H1 (cell line): ENCODE measurements at regions of chr6 and their contacts with region 1.

Region 1: DNA sequence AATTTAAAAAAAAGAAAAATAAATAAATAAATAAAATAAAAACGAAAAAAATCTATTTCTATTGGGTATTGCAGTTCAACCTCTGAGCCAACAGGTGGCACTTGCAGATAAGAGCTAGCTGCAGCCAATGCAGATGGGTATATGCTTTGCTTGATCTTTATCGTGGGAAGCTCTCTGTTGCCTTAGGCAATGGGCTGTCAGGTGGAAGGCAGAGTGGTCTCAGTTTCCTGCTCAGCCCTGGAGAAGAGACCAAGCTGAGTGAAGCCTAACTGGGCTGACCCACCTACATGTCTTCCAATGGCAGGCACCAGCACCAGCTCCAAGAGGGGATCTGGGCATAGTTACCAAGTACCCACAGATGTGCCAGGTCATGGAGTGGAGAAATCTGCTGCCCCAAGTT is 95.0 kb downstream of the AK9 start:
- DNase-seq: peak in 1 of 2 experiments; percentile 49
- H3K4me3 ChIP-seq: no peak overlapping the region
- H3K27ac ChIP-seq: no peak overlapping the region
- H3K4me1 ChIP-seq: no peaks in the 10 kb centered on the region
- H3K27me3 ChIP-seq: no peaks in the 10 kb centered on the region
- CTCF ChIP-seq: peak in 2 of 3 experiments; percentile 59 to 62; a peak in 3 of 4 replicates
- EP300 ChIP-seq: no peak
- POLR2A ChIP-seq: no peak
- RAD21 ChIP-seq: peak; percentile 80 to 82

Region 2: GRCh38 chr6:109308018-109308492 is 287.9 kb before region 1 on chr6:
- CTCF ChIA-PET with region 1: no interaction called
- POLR2A ChIA-PET with region 1: no interaction called
- DNase-seq: no peak
- H3K4me3 ChIP-seq: no peak overlapping the region
- H3K27ac ChIP-seq: no peak overlapping the region
- H3K4me1 ChIP-seq: 0 out of 7 replicates have a peak, but pooled peaks cover 0 to 2% (median 0%) of the 10 kb centered on the region in 4 experiments
- H3K27me3 ChIP-seq: no peaks in the 10 kb centered on the region
- CTCF ChIP-seq: no peak
- EP300 ChIP-seq: no peak
- POLR2A ChIP-seq: no peak
- RAD21 ChIP-seq: no peak

Region 3: DNA sequence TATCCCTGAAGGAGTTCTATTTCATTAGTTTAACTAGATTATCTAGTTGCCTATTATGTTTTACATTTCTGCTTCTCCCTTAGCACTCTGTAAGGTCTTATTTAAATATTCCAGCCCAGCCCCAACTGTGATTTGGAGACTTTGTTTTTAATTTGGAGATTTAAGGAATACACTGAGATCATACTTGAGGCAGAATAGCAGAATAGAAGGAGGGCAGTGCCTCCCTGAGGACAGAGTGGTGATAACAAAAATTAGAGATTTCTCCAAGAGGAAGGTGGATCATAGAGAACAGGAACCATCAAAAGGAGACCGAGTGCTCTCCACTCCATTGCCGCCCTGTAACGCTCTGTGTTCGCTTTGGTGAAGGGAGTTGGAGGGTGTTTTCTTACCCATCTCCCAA is 199.0 kb before region 1 on chr6:
- CTCF ChIA-PET with region 1: no interaction called
- POLR2A ChIA-PET with region 1: no interaction called
- DNase-seq: no peak
- H3K4me3 ChIP-seq: no peak overlapping the region
- H3K27ac ChIP-seq: no peak overlapping the region
- H3K4me1 ChIP-seq: no peaks in the 10 kb centered on the region
- H3K27me3 ChIP-seq: no peaks in the 10 kb centered on the region
- CTCF ChIP-seq: peak in 2 of 3 experiments; percentile 29 to 30; a peak in 2 of 4 replicates
- EP300 ChIP-seq: no peak
- POLR2A ChIP-seq: no peak
- RAD21 ChIP-seq: peak; percentile 68 to 71

Region 4: DNA sequence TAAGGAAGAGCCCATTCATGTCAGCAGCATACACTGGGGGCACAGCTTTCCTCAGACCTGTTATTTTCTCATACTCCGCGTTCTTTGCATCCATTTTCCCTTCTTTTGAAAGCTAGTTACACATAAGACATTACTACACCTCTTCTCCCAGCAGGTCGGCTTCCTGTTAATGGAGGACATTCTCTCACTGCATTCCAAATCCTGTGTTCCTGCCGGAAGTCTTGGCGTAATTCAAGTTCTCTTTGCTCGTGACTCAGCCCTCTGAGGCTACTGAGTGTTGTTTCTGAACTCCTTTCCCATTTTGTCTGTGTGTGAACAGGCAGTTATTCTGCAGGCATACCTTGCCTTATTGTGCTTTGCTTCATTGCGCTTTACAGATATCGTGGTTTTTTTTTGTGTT is 15.5 kb before region 1 on chr6:
- CTCF ChIA-PET with region 1: interaction called, 20 read pairs
- POLR2A ChIA-PET with region 1: no interaction called
- DNase-seq: no peak
- H3K4me3 ChIP-seq: no peak overlapping the region
- H3K27ac ChIP-seq: 0 out of 2 replicates have a peak overlapping the region, but pooled peaks have one; percentile 4
- H3K4me1 ChIP-seq: peaks cover 0 to 5% (median 3%) of the 10 kb centered on the region in 4 experiments; a peak in 3 of 7 replicates
- H3K27me3 ChIP-seq: no peaks in the 10 kb centered on the region
- CTCF ChIP-seq: no peak
- EP300 ChIP-seq: no peak
- POLR2A ChIP-seq: no peak
- RAD21 ChIP-seq: no peak

Region 5: GRCh38 chr6:109606359-109606758 is 10.4 kb after region 1 on chr6:
- CTCF ChIA-PET with region 1: interaction called, 15 read pairs
- POLR2A ChIA-PET with region 1: no interaction called
- DNase-seq: no peak
- H3K4me3 ChIP-seq: no peak overlapping the region
- H3K27ac ChIP-seq: no peak overlapping the region
- H3K4me1 ChIP-seq: no peaks in the 10 kb centered on the region
- H3K27me3 ChIP-seq: no peaks in the 10 kb centered on the region; a peak in 1 of 7 replicates
- CTCF ChIP-seq: no peak
- EP300 ChIP-seq: no peak
- POLR2A ChIP-seq: no peak
- RAD21 ChIP-seq: no peak

Region 6: GRCh38 chr6:109690737-109691621 is 95.0 kb after region 1 on chr6 and contains the starts of genes AK9 and FIG4:
- CTCF ChIA-PET with region 1: interaction called, 16 read pairs
- POLR2A ChIA-PET with region 1: no interaction called
- DNase-seq: peak; percentile 84 to 95
- H3K4me3 ChIP-seq: peak within 1 kb of the TSS; percentile 69 to 95 (median 84)
- H3K27ac ChIP-seq: peak within 1 kb of the TSS; percentile 42
- H3K4me1 ChIP-seq: peaks cover 0 to 2% (median 0%) of the 10 kb centered on the region in 4 experiments; a peak in 1 of 7 replicates
- H3K27me3 ChIP-seq: no peaks in the 10 kb centered on the region
- CTCF ChIP-seq: 0 out of 4 replicates have a peak, but pooled peaks of 1 of the 3 experiments have one; percentile 6
- EP300 ChIP-seq: no peak
- POLR2A ChIP-seq: peak; percentile 57 to 71
- RAD21 ChIP-seq: peak in 1 of 2 experiments; percentile 21; a peak in 2 of 4 replicates
- total RNA-seq, gene AK9: 1.8 and 2.7 TPM in 2 replicates
- total RNA-seq, gene FIG4: 21.3 and 21.9 TPM in 2 replicates

Region 7: GRCh38 chr6:109705258-109705657 is 109.3 kb after region 1 on chr6:
- CTCF ChIA-PET with region 1: interaction called, 10 read pairs
- POLR2A ChIA-PET with region 1: no interaction called
- DNase-seq: peak; percentile 75 to 83
- H3K4me3 ChIP-seq: no peak overlapping the region
- H3K27ac ChIP-seq: no peak overlapping the region
- H3K4me1 ChIP-seq: peaks cover 0 to 5% (median 3%) of the 10 kb centered on the region in 4 experiments; a peak in 5 of 7 replicates
- H3K27me3 ChIP-seq: no peaks in the 10 kb centered on the region
- CTCF ChIP-seq: peak; percentile 88 to 99 (median 98)
- EP300 ChIP-seq: no peak
- POLR2A ChIP-seq: no peak
- RAD21 ChIP-seq: peak; percentile 99 to 100